Activated T-helper 1 cell treated with anti-CD3 and anti-CD28 coated beads, Interleukin-12 subunit alpha, Interleukin-12 subunit beta, Interleukin-2, Interleukin-4 antibody, amounts not matched to agents 30 ng/mL and 10 ng/mL and 1 ng/mL, durations not matched to agents 14 hours and 24 hours and 36 hours (primary cell): ENCODE measurements at regions of chr6 and their contacts with region 1.

Region 1: DNA sequence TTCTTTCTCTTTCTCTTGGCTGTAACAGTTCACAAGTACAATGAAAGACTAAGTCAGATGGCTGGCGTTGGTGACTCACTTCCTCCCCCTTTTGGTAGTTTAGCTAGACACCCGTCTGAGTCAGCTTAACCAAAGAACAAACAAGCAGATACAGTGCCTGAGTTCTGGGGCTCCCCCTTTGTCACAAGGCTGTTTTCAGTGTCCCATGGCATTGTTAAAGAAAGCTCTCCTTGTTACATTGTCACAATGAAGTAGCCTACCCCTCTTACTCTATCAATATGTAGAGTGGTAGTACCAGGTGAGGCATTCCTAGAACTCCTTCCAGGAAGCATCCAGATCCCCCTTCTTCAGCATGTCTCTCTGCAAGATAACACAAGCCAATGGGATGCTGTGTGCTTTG is 38.6 kb downstream of the KIAA0408 start:
- DNase-seq: peak; percentile 73
- H3K4me3 Mint-ChIP-seq: peak overlapping the region; percentile 3
- H3K27ac Mint-ChIP-seq: peak overlapping the region; percentile 47
- H3K4me1 Mint-ChIP-seq: peaks cover 17% of the 10 kb centered on the region
- H3K27me3 Mint-ChIP-seq: no peaks in the 10 kb centered on the region

Region 2: GRCh38 chr6:126339796-126340609 is 1080.6 kb before region 1 on chr6 and contains the start of gene CENPW:
- intact Hi-C with region 1: loop called (anchors 1 kb)
- DNase-seq: peak; percentile 92
- H3K4me3 Mint-ChIP-seq: no peak within 1 kb of the TSS
- H3K27ac Mint-ChIP-seq: no peak within 1 kb of the TSS
- H3K4me1 Mint-ChIP-seq: peaks cover 27% of the 10 kb centered on the region
- H3K27me3 Mint-ChIP-seq: no peaks in the 10 kb centered on the region
- total RNA-seq, gene CENPW: 43.4 and 44.2 TPM in 2 replicates

Region 3: GRCh38 chr6:127266178-127266891 is 154.2 kb before region 1 on chr6 and contains the start of gene RNF146:
- intact Hi-C with region 1: loop called (anchors 1 kb)
- DNase-seq: peak; percentile 63
- H3K4me3 Mint-ChIP-seq: peak within 1 kb of the TSS; percentile 100
- H3K27ac Mint-ChIP-seq: peak within 1 kb of the TSS; percentile 100
- H3K4me1 Mint-ChIP-seq: peaks cover 42% of the 10 kb centered on the region
- H3K27me3 Mint-ChIP-seq: peaks cover 9% of the 10 kb centered on the region
- total RNA-seq, gene RNF146: 18.3 and 20.5 TPM in 2 replicates

Region 4: GRCh38 chr6:127342946-127343808 is 77.4 kb before region 1 on chr6 and contains the start of gene ECHDC1:
- intact Hi-C with region 1: loop called (anchors 1 kb)
- DNase-seq: peak; percentile 63
- H3K4me3 Mint-ChIP-seq: no peak within 1 kb of the TSS
- H3K27ac Mint-ChIP-seq: no peak within 1 kb of the TSS
- H3K4me1 Mint-ChIP-seq: peaks cover 12% of the 10 kb centered on the region
- H3K27me3 Mint-ChIP-seq: no peaks in the 10 kb centered on the region
- total RNA-seq, gene ECHDC1: 57.4 and 61.8 TPM in 2 replicates

Region 5: GRCh38 chr6:127446356-127446755 is 25.8 kb after region 1 on chr6:
- intact Hi-C with region 1: loop called (anchors 2 kb)
- DNase-seq: no peak
- H3K4me3 Mint-ChIP-seq: no peak overlapping the region
- H3K27ac Mint-ChIP-seq: no peak overlapping the region
- H3K4me1 Mint-ChIP-seq: peaks cover 5% of the 10 kb centered on the region
- H3K27me3 Mint-ChIP-seq: no peaks in the 10 kb centered on the region

Region 6: DNA sequence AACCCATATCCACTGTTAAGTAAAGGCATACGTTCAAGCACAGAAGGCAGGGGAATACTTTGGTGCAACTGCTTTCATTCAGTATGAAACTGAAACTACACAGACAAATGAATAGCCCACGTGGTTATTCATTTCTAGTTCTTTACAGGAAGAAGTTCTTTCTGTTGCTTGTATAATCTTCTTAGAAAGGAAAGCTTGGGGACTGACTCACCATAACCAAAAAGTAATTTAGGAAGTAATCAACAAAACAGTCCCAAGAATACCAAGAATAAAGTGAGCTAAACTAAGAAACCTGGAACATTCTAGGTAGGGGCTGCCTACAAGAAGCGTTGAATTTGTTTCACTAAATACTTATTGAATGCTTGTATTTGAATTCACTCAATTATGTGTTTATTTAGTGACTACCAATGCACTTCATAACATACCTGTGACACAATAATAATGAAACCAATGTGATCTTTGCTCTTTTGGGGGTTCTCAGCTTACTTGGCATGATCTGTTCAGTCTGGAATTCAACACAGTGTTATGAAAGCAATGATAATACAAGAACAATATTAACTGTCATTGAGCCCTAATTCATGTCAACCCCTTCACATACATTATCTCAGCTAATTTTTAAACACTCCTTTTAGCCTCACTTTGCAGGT is 63.8 kb after region 1 on chr6:
- intact Hi-C with region 1: loop called (anchors 1 kb)
- DNase-seq: peak; percentile 14
- H3K4me3 Mint-ChIP-seq: peak overlapping the region; percentile 73
- H3K27ac Mint-ChIP-seq: peak overlapping the region; percentile 68
- H3K4me1 Mint-ChIP-seq: peaks cover 68% of the 10 kb centered on the region
- H3K27me3 Mint-ChIP-seq: no peaks in the 10 kb centered on the region

Region 7: GRCh38 chr6:127907960-127908640 is 487.5 kb after region 1 on chr6:
- intact Hi-C with region 1: loop called (anchors 10 kb)
- DNase-seq: no peak
- H3K4me3 Mint-ChIP-seq: peak overlapping the region; percentile 66
- H3K27ac Mint-ChIP-seq: peak overlapping the region; percentile 82
- H3K4me1 Mint-ChIP-seq: peaks cover 45% of the 10 kb centered on the region
- H3K27me3 Mint-ChIP-seq: no peaks in the 10 kb centered on the region